ENCODE measurements at regions of chr2 and their contacts with region 1.

Region 1: GRCh38 chr2:25673300-25674076 is at the start of gene DTNB:
- DNase-seq: peak; percentile 86
- ATAC-seq: peak; percentile 74
- H3K4me3 Mint-ChIP-seq: peak within 1 kb of the TSS; percentile 79
- H3K27ac Mint-ChIP-seq: peak within 1 kb of the TSS; percentile 76
- H3K4me1 Mint-ChIP-seq: peaks cover 31% of the 10 kb centered on the region
- H3K27me3 Mint-ChIP-seq: peaks cover 11% of the 10 kb centered on the region
- total RNA-seq, gene DTNB: 17.1 to 33.5 TPM

Region 2: DNA sequence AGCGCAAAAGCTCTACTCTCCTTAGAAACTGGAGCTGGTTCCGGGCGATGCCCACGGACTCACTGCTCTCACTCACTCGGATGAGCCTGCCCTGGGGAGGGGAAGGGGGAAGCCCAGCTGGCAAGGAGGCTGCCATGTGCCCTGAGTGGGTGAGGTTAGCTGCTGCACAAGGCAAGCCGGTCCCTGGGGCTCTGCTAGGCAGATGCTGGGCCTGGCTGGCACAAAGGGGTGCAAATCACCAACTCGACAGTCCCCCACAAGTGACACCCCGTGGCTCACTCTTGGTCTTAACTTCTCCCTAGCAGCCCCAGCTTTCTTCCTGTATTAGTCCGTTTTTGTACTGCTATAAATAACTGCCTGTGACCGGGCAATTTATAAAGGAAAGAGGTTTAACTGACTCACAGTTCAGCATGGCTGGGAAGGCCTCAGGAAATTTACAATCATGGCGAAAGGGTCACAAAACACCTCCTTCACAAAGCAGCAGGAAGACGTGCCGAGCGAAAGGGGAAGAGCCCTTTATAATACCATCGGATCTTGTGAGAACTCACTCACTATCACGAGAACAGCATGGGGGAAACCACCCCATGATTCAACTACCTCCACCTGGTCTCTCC is 786.7 kb before region 1 on chr2:
- CTCF ChIA-PET with region 1: no interaction called
- POLR2A ChIA-PET with region 1: interaction called, 10 read pairs
- intact Hi-C with region 1: no loop called
- DNase-seq: no peak
- ATAC-seq: no peak
- H3K4me3 Mint-ChIP-seq: no peak overlapping the region
- H3K27ac Mint-ChIP-seq: no peak overlapping the region
- H3K4me1 Mint-ChIP-seq: peaks cover 13% of the 10 kb centered on the region
- H3K27me3 Mint-ChIP-seq: no peaks in the 10 kb centered on the region

Region 3: GRCh38 chr2:25041928-25042320 is 631.6 kb before region 1 on chr2 and contains the start of gene EFR3B:
- CTCF ChIA-PET with region 1: no interaction called
- POLR2A ChIA-PET with region 1: no interaction called
- intact Hi-C with region 1: loop called in 1 of 2 experiments (anchors 2 kb)
- DNase-seq: peak; percentile 93
- ATAC-seq: peak; percentile 84
- H3K4me3 Mint-ChIP-seq: peak within 1 kb of the TSS; percentile 71
- H3K27ac Mint-ChIP-seq: no peak within 1 kb of the TSS
- H3K4me1 Mint-ChIP-seq: peaks cover 32% of the 10 kb centered on the region
- H3K27me3 Mint-ChIP-seq: peaks cover 38% of the 10 kb centered on the region
- total RNA-seq, gene EFR3B: 1.0 to 1.1 TPM

Region 4: DNA sequence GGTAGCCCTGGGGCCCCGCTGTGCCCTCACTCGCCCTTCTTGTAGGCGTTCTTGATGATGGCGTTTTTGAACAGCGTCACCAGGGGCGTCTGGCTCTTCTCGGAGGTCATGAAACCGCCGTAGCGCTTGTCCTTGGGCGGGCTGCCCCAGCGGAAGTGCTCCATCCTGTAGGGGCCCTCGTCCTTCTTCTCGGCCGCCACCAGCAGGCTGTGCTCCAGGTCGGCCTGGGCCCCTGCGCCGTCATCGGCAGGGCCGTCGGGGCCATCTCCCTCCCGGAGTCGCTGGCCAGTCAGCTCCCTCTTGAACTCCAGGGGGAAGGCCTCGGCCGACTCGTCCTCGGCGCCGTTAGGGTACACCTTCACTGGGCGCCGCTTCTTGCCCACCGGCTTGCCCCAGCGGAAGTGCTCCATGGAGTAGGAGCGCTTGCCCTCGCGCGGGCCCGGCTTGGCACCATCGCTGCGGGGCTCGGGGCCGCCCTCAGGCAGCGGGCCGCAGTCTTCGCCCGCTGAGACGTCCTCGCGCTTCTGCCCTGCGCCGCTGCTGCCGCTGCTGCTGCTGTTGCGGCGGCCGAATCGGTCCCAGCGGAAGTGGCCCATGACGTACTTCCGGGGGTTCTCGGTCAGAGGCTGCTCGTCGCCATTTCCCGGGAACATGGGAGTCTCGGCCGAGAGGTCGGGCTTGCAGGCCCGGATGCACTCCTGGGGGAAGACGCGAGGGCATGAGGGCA is 512.3 kb before region 1 on chr2:
- CTCF ChIA-PET with region 1: no interaction called
- POLR2A ChIA-PET with region 1: no interaction called
- intact Hi-C with region 1: loop called in 1 of 2 experiments (anchors 2 kb)
- DNase-seq: peak; percentile 91
- ATAC-seq: peak; percentile 76
- H3K4me3 Mint-ChIP-seq: peak overlapping the region; percentile 76
- H3K27ac Mint-ChIP-seq: peak overlapping the region; percentile 84
- H3K4me1 Mint-ChIP-seq: peaks cover 23% of the 10 kb centered on the region
- H3K27me3 Mint-ChIP-seq: no peaks in the 10 kb centered on the region

Region 5: GRCh38 chr2:25276569-25277465 is 396.7 kb before region 1 on chr2:
- CTCF ChIA-PET with region 1: no interaction called
- POLR2A ChIA-PET with region 1: no interaction called
- intact Hi-C with region 1: loop called in 1 of 2 experiments (anchors 10 kb)
- DNase-seq: peak; percentile 90
- ATAC-seq: peak; percentile 65
- H3K4me3 Mint-ChIP-seq: peak overlapping the region; percentile 9
- H3K27ac Mint-ChIP-seq: peak overlapping the region; percentile 90
- H3K4me1 Mint-ChIP-seq: peaks cover 70% of the 10 kb centered on the region
- H3K27me3 Mint-ChIP-seq: no peaks in the 10 kb centered on the region

Region 6: DNA sequence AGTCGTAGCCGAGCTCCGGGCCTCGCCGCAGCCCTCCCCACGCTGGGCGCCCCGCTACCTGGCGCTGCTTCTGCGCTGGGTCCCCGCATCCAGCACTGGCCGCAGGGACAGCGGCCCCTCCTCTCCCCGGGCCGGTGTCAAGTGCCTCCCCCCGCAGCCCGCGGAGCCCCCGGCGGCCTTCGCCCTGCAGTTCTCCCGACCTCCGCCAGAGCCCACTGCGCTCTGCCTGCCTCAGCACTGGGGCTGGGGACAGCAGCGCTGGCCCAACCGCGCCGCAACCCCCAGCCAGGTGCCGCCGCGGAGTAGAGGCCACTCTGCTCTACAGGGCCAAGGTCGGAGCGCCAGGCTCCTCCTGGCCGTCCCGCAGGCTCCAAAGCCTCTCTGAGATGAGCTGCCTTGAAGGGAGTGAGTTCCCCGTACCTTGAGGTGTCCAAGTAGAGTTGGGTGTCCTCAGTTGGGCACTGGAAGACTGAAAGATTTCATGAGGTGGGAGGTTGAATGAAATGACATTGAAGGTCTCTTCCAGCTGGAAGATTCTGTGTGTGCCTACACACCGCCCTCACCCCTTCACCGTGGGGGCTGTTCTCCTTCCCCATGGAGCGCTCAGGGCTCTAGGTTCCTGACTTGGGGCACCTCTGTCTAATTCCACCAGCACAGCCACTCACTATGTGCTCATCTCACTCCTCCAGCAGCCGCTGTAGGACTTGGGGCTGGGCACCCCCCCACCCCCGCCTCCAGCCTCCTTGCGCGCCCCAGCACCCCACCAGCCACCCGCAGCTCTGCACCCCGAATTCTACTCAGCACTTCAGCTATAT is 330.9 kb before region 1 on chr2:
- CTCF ChIA-PET with region 1: no interaction called
- POLR2A ChIA-PET with region 1: no interaction called
- intact Hi-C with region 1: loop called in 1 of 2 experiments (anchors 5 kb)
- DNase-seq: peak; percentile 90
- ATAC-seq: peak; percentile 80
- H3K4me3 Mint-ChIP-seq: peak overlapping the region; percentile 75
- H3K27ac Mint-ChIP-seq: no peak overlapping the region
- H3K4me1 Mint-ChIP-seq: peaks cover 39% of the 10 kb centered on the region
- H3K27me3 Mint-ChIP-seq: no peaks in the 10 kb centered on the region

Region 7: GRCh38 chr2:25586726-25587144 is 86.8 kb before region 1 on chr2:
- CTCF ChIA-PET with region 1: no interaction called
- POLR2A ChIA-PET with region 1: no interaction called
- intact Hi-C with region 1: no loop called
- DNase-seq: peak; percentile 65
- ATAC-seq: peak; percentile 88
- H3K4me3 Mint-ChIP-seq: no peak overlapping the region
- H3K27ac Mint-ChIP-seq: peak overlapping the region; percentile 68
- H3K4me1 Mint-ChIP-seq: peaks cover 18% of the 10 kb centered on the region
- H3K27me3 Mint-ChIP-seq: no peaks in the 10 kb centered on the region

Region 8: GRCh38 chr2:25722224-25722623 is 48.7 kb after region 1 on chr2:
- CTCF ChIA-PET with region 1: no interaction called
- POLR2A ChIA-PET with region 1: no interaction called
- intact Hi-C with region 1: no loop called
- DNase-seq: no peak
- ATAC-seq: no peak
- H3K4me3 Mint-ChIP-seq: no peak overlapping the region
- H3K27ac Mint-ChIP-seq: no peak overlapping the region
- H3K4me1 Mint-ChIP-seq: peaks cover 6% of the 10 kb centered on the region
- H3K27me3 Mint-ChIP-seq: no peaks in the 10 kb centered on the region

Region 9: DNA sequence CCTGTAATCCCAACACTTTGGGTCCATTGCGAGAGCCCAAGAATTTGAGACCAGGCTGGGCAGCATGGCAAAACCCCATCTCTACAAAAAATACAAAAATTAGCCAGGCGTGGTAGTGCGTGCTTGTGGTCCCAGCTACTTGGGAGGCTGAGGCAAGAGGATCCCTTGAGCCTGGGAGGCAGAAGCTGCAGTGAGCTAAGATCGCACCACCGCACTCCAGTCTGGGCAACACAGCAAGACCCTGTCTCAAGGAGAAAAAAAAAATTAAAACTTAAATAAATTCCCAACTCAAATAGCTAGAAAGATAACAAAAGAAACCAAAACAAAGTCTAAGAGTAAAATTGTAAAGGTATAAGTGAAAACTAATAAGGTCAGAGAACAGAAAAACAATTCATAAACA is 198.6 kb after region 1 on chr2:
- CTCF ChIA-PET with region 1: no interaction called
- POLR2A ChIA-PET with region 1: no interaction called
- intact Hi-C with region 1: no loop called
- DNase-seq: no peak
- ATAC-seq: no peak
- H3K4me3 Mint-ChIP-seq: no peak overlapping the region
- H3K27ac Mint-ChIP-seq: no peak overlapping the region
- H3K4me1 Mint-ChIP-seq: peaks cover 31% of the 10 kb centered on the region
- H3K27me3 Mint-ChIP-seq: no peaks in the 10 kb centered on the region

Region 10: GRCh38 chr2:27071277-27071989 is 1397.9 kb after region 1 on chr2 and contains the start of gene OST4:
- CTCF ChIA-PET with region 1: no interaction called
- POLR2A ChIA-PET with region 1: no interaction called
- intact Hi-C with region 1: loop called in 1 of 2 experiments (anchors 10 kb)
- DNase-seq: peak; percentile 94
- ATAC-seq: peak; percentile 89
- H3K4me3 Mint-ChIP-seq: peak within 1 kb of the TSS; percentile 96
- H3K27ac Mint-ChIP-seq: peak within 1 kb of the TSS; percentile 91
- H3K4me1 Mint-ChIP-seq: peaks cover 66% of the 10 kb centered on the region
- H3K27me3 Mint-ChIP-seq: no peaks in the 10 kb centered on the region
- total RNA-seq, gene OST4: 305 to 406 TPM